ENCODE measurements at regions of chr5 and their contacts with region 1.

Region 1: GRCh38 chr5:87400305-87400899 is 12.3 kb downstream of the CCNH start:
- DNase-seq: no peak

Region 2: DNA sequence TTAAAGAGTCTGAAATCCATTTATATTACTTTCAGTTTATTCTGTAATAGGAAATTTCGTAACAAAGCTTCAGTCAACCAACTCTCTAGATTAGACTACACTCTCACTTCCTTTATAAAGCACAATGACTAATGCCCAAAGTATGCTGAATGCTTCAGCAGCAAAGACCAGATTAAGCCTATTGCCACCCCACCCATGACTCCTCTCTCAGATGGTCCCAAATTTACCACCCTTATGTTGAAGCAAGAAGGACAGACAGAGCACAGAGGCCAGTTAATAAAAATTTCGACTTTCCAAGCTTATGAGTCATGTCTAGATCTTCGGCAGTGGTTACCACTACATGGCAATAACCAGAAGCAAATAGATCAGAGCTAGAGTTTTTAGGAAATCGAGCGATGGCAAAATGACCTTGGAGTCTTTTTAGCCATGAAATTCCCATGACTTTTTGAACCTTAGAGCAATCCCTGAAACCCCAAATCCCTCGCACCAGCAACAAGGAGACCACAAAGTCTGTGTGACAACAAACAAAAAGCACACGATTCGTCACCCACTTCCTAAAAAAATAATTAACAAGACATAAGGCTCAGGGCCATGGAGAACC is 420.5 kb before region 1 on chr5:
- intact Hi-C with region 1: no loop called
- DNase-seq: no peak

Region 3: DNA sequence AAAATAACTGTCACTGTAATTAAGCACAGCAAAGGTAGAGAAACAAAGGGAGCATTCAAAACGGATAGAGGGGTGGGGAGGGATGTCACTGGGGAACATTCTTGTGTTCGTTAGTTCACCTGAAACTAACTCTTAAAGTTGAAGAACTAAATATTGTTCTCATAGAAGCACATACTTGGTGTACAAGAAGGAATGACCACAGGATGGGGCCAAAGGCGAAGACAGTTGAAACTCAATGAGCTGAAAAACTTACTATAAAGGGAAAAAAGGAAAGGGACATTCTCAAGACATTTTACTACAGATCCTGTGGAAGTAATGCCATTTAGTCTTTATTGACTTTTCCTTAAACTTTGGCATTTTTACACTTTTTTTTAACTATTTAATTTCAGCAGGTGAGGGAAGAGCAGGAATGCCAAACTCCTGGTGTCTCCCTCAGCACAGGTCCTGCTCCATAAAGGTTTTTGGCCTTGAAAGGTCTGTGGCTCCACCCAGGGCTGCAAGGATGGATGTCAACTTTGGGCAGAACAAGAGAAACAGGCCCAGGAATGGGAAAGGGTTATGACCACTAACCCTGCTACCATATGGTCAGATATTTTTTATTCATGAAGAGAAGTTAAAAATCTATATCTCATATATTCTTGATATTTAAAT is 330.3 kb before region 1 on chr5:
- intact Hi-C with region 1: loop called (anchors 2 kb)
- DNase-seq: peak in 1 of 10 donors; percentile 10